Left cardiac atrium (tissue), 4 donors: ENCODE measurements at regions of chr19 and their contacts with region 1.

Region 1: GRCh38 chr19:49555600-49556411 is 24.6 kb downstream of the NOSIP start:
- DNase-seq: peak; percentile 68
- ATAC-seq: peak; percentile 63

Region 2: DNA sequence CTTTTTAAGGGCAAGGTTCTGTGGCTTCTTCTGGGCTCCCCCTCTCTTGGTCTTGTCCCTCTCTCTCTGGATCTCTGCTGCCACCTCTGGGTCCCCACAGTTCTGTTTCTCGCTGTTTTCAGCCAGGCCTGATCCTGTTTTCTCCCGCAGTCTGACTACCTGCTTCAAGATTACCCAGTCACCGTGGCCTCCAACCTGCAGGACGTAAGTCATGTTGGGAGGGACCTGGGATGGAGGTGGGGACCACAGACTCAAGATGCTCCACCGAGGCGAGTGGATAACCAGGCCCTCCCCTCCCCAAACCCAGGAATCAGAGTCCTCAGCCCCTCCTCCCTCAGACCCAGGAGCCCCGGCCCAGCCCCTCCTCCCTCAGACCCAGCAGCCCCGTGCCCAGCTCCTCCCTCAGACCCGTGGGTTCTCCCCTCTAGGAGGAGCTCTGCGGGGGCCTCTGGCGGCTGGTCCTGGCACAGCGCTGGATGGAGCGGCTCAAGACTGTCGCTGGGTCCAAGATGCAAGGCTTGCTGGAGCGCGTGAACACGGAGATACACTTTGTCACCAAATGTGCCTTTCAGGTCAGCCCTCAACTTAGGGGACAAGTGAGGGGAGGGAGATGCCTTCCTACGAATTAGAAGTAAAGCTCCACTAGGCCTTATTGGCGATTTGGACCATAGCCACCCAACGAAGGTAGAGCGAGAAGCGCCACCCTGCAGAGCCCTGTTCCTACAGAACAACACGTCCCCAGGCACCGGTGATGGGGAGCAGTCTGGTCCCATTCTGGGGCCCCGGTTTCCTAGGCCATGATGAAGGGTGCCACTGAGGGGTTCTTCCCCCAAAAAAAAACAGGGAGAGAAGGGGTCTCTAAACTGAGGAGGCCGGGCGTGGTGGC is 79.6 kb before region 1 on chr19:
- intact Hi-C with region 1: no loop called
- DNase-seq: peak; percentile 61
- ATAC-seq: peak in 1 of 2 donors; percentile 31

Region 3: GRCh38 chr19:49497047-49497788 is 58.6 kb before region 1 on chr19:
- intact Hi-C with region 1: loop called in 1 of 2 experiments (anchors 5 kb)
- DNase-seq: peak; percentile 77
- ATAC-seq: peak in 1 of 2 donors; percentile 23